ENCODE measurements at regions of chr17 and their contacts with region 1.

Region 1: DNA sequence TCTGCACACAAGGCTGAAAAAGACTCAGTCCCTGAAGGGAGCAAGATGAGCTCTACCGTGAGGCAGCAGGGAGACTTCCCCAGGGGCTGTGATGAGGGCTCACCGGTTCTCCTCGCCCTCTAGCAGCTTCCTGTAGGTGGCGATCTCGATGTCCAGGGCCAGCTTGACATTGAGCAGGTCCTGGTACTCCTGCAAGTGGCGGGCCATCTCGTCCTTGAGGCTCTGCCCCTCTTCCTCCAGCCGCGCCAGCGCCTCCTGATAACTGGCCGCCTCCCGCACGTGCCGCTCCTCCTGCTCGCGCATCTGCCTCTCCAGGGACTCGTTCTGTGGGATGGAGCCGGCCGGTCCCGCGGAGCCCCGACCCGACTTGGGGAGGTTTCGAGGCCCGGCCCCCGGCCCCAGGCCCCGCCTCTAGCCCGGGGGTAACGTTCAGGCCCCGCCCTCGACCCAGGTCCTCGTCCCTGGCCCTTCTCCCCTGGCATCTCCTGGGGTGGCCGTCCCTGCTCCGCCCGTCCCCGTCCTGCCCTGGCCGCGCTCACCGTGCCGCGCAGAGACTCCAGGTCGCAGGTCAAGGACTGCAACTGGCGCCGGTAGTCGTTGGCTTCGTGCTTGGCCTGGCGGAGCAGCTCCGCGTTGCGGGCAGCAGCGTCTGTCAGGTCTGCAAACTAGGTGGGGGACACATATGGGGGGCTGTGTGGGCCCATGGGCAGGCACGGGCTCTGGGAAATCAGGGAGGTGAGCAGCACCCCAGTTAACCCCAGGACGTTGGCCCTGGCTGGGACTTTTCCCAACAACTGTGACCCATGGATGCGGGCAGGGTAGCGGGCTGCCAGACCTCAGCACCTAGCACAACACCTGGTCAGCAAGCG is 3.9 kb downstream of the GFAP start:
- DNase-seq: peak; percentile 83
- ATAC-seq: peak; percentile 91
- H3K4me3 Mint-ChIP-seq: peak overlapping the region; percentile 66
- H3K27ac Mint-ChIP-seq: no peak overlapping the region
- H3K4me1 Mint-ChIP-seq: peaks cover 7% of the 10 kb centered on the region
- H3K27me3 Mint-ChIP-seq: peaks cover 41% of the 10 kb centered on the region
- CTCF ChIP-seq: peak; percentile 13; the same call in 1 of the 2 replicates

Region 2: DNA sequence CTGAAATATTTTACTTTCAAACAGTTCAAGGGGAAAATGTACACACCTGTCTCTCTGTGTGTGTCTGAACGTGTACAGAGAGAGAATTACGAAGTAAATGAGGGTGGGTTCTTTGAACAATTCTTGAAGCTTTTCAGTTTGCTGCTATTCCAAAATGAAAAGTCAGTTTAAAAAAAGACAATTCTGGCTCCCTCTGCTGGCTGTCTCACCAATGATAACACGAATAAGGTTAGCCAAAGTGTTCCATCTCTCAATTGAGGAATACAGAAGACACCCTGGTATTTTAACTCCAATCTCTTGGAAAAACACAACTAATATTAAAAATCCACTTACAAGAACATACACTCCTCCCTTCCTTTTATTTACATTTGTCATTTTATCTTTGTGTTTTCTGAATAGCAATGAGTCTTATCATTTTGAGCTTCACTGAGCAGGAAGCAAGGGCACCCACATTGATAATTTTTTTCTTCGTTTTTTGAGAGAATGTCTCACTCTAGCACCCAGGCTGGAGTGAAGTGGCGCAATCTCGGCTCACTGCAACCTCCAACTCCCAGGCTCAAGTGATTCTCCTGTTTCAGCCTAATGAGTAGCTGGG is 32.6 kb before region 1 on chr17:
- CTCF ChIA-PET with region 1: interaction called, 12 read pairs
- POLR2A ChIA-PET with region 1: no interaction called
- DNase-seq: no peak
- ATAC-seq: no peak
- H3K4me3 Mint-ChIP-seq: no peak overlapping the region
- H3K27ac Mint-ChIP-seq: no peak overlapping the region
- H3K4me1 Mint-ChIP-seq: no peaks in the 10 kb centered on the region
- H3K27me3 Mint-ChIP-seq: no peaks in the 10 kb centered on the region
- CTCF ChIP-seq: no peak

Region 3: DNA sequence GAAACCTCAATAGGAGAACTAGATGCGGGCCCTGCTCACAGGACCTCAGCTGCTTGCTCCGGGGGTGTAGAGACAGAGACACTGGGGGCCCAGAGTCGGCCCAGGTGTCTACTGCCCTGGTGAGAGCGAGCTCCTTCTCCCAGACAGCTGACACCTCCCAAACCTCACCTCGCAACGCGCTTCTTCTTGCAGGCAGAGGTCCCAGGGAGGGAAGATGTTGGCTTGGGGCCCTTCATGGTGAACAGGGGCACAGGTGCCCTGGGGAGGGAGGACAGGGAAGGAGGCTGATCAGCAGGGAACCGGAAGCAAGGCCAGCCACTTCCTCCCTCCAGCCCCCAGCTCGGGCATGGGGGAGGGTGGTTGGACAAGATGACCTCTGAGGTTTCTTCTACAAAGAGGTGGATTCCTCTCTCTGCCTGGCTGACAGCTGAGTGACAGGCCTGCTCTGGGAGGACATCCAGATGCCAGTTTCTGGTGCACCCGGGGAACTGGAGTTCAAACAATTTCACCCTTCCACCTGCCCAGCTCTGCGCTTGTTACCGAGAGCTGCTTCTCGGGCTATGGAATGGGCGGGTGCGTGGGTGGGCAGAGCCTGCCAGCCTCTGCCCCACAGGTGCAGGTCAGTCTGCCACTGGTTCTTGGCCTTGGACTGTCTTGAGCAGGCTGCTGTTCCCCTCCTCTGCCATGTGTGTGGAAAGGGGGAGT is 15.6 kb after region 1 on chr17:
- CTCF ChIA-PET with region 1: interaction called, 89 read pairs
- POLR2A ChIA-PET with region 1: no interaction called
- DNase-seq: no peak
- ATAC-seq: no peak
- H3K4me3 Mint-ChIP-seq: no peak overlapping the region
- H3K27ac Mint-ChIP-seq: no peak overlapping the region
- H3K4me1 Mint-ChIP-seq: peaks cover 3% of the 10 kb centered on the region; the same call in 1 of the 2 replicates
- H3K27me3 Mint-ChIP-seq: no peaks in the 10 kb centered on the region
- CTCF ChIP-seq: no peak

Region 4: GRCh38 chr17:44968226-44969143 is 57.1 kb after region 1 on chr17 and contains the start of gene C1QL1:
- CTCF ChIA-PET with region 1: interaction called, 15 read pairs
- POLR2A ChIA-PET with region 1: no interaction called
- DNase-seq: peak; percentile 97
- ATAC-seq: peak; percentile 78
- H3K4me3 Mint-ChIP-seq: peak within 1 kb of the TSS; percentile 92
- H3K27ac Mint-ChIP-seq: peak within 1 kb of the TSS; percentile 87
- H3K4me1 Mint-ChIP-seq: peaks cover 36% of the 10 kb centered on the region
- H3K27me3 Mint-ChIP-seq: peaks cover 69% of the 10 kb centered on the region
- CTCF ChIP-seq: no peak
- total RNA-seq, gene C1QL1: 13.4 to 16.8 TPM (median 15.6 TPM) in 3 replicates

Region 5: GRCh38 chr17:45038728-45039634 is 127.6 kb after region 1 on chr17:
- CTCF ChIA-PET with region 1: interaction called, 10 read pairs
- POLR2A ChIA-PET with region 1: no interaction called
- DNase-seq: no peak
- ATAC-seq: no peak
- H3K4me3 Mint-ChIP-seq: no peak overlapping the region
- H3K27ac Mint-ChIP-seq: peak overlapping the region; percentile 88
- H3K4me1 Mint-ChIP-seq: peaks cover 34% of the 10 kb centered on the region
- H3K27me3 Mint-ChIP-seq: no peaks in the 10 kb centered on the region
- CTCF ChIP-seq: no peak